ENCODE measurements at regions of chr15 and their contacts with region 1.

Region 1: GRCh38 chr15:85730001-85730820 is 64.5 kb downstream of the KLHL25 start:
- DNase-seq: peak in 8 of 14 experiments; percentile 23 to 83 (median 44)
- ATAC-seq: peak; percentile 89
- H3K4me3 ChIP-seq: no peak overlapping the region
- H3K4me3 Mint-ChIP-seq: no peak overlapping the region
- H3K27ac ChIP-seq: no peak overlapping the region
- H3K27ac Mint-ChIP-seq: peak overlapping the region; percentile 66
- H3K4me1 ChIP-seq: no peaks in the 10 kb centered on the region
- H3K4me1 Mint-ChIP-seq: peaks cover 7% of the 10 kb centered on the region
- H3K27me3 ChIP-seq: no peaks in the 10 kb centered on the region
- H3K27me3 Mint-ChIP-seq: no peaks in the 10 kb centered on the region
- CTCF ChIP-seq: peak; percentile 75

Region 2: GRCh38 chr15:85794603-85795336 is 64.6 kb after region 1 on chr15 and contains the start of gene KLHL25:
- CTCF ChIA-PET with region 1: no interaction called
- POLR2A ChIA-PET with region 1: interaction called, 3 read pairs
- intact Hi-C with region 1: loop called in 1 of 2 experiments (anchors 2 kb)
- DNase-seq: peak; percentile 84 to 97 (median 92)
- ATAC-seq: peak; percentile 95
- H3K4me3 ChIP-seq: peak within 1 kb of the TSS; percentile 80
- H3K4me3 Mint-ChIP-seq: peak within 1 kb of the TSS; percentile 99
- H3K27ac ChIP-seq: peak within 1 kb of the TSS in 1 of 2 donors; percentile 56
- H3K27ac Mint-ChIP-seq: peak within 1 kb of the TSS; percentile 56
- H3K4me1 ChIP-seq: peaks cover 38% of the 10 kb centered on the region
- H3K4me1 Mint-ChIP-seq: peaks cover 47% of the 10 kb centered on the region
- H3K27me3 ChIP-seq: no peaks in the 10 kb centered on the region
- H3K27me3 Mint-ChIP-seq: no peaks in the 10 kb centered on the region
- CTCF ChIP-seq: no peak
- total RNA-seq, gene KLHL25: 9.0 to 10.2 TPM

Region 3: DNA sequence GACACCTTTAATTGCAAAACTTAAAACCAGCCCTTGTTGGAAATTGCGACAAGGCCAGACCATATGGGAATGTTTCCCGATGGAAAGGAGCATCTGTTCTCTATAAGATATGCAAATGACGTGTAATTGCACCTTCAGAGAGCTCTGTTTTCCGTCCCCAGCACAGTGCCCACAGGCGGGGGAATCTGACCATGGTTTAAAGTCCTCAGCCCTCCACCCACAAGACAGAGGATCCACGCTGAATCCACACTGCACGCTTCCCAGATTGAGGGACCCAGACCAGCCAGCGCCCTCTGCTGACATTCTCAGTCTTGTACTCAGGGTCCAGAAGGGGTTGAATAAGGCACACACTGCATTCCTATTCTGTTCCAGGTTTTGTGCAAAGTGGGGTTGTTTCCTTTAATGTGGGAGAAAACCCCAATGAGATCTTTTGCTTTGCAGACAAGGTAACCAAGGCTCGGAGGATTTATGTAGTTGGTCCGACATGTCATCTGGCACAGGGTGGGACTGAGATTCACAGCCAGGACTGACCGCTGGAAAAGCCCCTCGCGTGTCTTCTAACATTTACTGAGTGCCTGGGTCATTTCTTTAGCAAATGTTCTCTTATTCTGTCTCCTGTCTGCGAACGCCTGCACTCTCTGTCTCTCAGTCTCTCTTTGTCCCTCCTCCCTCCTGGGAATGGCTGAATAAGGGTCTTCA is 101.4 kb after region 1 on chr15:
- CTCF ChIA-PET with region 1: no interaction called
- POLR2A ChIA-PET with region 1: no interaction called
- intact Hi-C with region 1: loop called in 1 of 2 experiments (anchors 2 kb)
- DNase-seq: peak in 9 of 14 experiments; percentile 9 to 61 (median 24)
- ATAC-seq: peak; percentile 43
- H3K4me3 ChIP-seq: no peak overlapping the region
- H3K4me3 Mint-ChIP-seq: no peak overlapping the region
- H3K27ac ChIP-seq: no peak overlapping the region
- H3K27ac Mint-ChIP-seq: no peak overlapping the region
- H3K4me1 ChIP-seq: no peaks in the 10 kb centered on the region
- H3K4me1 Mint-ChIP-seq: no peaks in the 10 kb centered on the region
- H3K27me3 ChIP-seq: peaks cover 0 to 2% of the 10 kb centered on the region in 2 experiments
- H3K27me3 Mint-ChIP-seq: no peaks in the 10 kb centered on the region
- CTCF ChIP-seq: peak; percentile 49

Region 4: GRCh38 chr15:85840065-85840801 is 110.0 kb after region 1 on chr15:
- CTCF ChIA-PET with region 1: interaction called, 16 read pairs
- POLR2A ChIA-PET with region 1: interaction called, 3 read pairs
- intact Hi-C with region 1: loop called (anchors 1 kb)
- DNase-seq: peak; percentile 56 to 88 (median 74)
- ATAC-seq: peak; percentile 96
- H3K4me3 ChIP-seq: peak overlapping the region; percentile 33
- H3K4me3 Mint-ChIP-seq: peak overlapping the region; percentile 54
- H3K27ac ChIP-seq: no peak overlapping the region
- H3K27ac Mint-ChIP-seq: no peak overlapping the region
- H3K4me1 ChIP-seq: peaks cover 10% of the 10 kb centered on the region
- H3K4me1 Mint-ChIP-seq: no peaks in the 10 kb centered on the region
- H3K27me3 ChIP-seq: no peaks in the 10 kb centered on the region
- H3K27me3 Mint-ChIP-seq: peaks cover 17% of the 10 kb centered on the region
- CTCF ChIP-seq: peak; percentile 97

Measured in CD4-positive, alpha-beta T cell (primary cell).